ENCODE measurements at regions of chr2 and their contacts with region 1.

Region 1: GRCh38 chr2:15939854-15940660 is at the start of gene MYCN:
- DNase-seq: peak; percentile 92 to 95
- H3K4me3 ChIP-seq: peak within 1 kb of the TSS; percentile 75
- H3K4me3 Mint-ChIP-seq: peak within 1 kb of the TSS; percentile 85
- H3K27ac Mint-ChIP-seq: peak within 1 kb of the TSS; percentile 69
- H3K4me1 ChIP-seq: peaks cover 19% of the 10 kb centered on the region
- H3K4me1 Mint-ChIP-seq: peaks cover 17% of the 10 kb centered on the region
- H3K27me3 ChIP-seq: no peaks in the 10 kb centered on the region
- H3K27me3 Mint-ChIP-seq: no peaks in the 10 kb centered on the region
- CTCF ChIP-seq: peak in 1 of 2 experiments; percentile 80
- total RNA-seq, gene MYCN: 46.6 and 54.4 TPM in 2 replicates

Region 2: GRCh38 chr2:15748736-15749323 is 191.2 kb before region 1 on chr2:
- CTCF ChIA-PET with region 1: no interaction called
- POLR2A ChIA-PET with region 1: no interaction called
- intact Hi-C with region 1: no loop called
- DNase-seq: peak in 1 of 2 experiments; percentile 59
- H3K4me3 ChIP-seq: no peak overlapping the region
- H3K4me3 Mint-ChIP-seq: no peak overlapping the region
- H3K27ac Mint-ChIP-seq: peak overlapping the region; percentile 93
- H3K4me1 ChIP-seq: peaks cover 74% of the 10 kb centered on the region
- H3K4me1 Mint-ChIP-seq: peaks cover 48% of the 10 kb centered on the region
- H3K27me3 ChIP-seq: no peaks in the 10 kb centered on the region
- H3K27me3 Mint-ChIP-seq: no peaks in the 10 kb centered on the region
- CTCF ChIP-seq: peak; percentile 27 to 40

Region 3: GRCh38 chr2:15880226-15881119 is 59.6 kb before region 1 on chr2:
- CTCF ChIA-PET with region 1: no interaction called
- POLR2A ChIA-PET with region 1: no interaction called
- intact Hi-C with region 1: no loop called
- DNase-seq: no peak
- H3K4me3 ChIP-seq: no peak overlapping the region
- H3K4me3 Mint-ChIP-seq: no peak overlapping the region
- H3K27ac Mint-ChIP-seq: no peak overlapping the region
- H3K4me1 ChIP-seq: peaks cover 15% of the 10 kb centered on the region
- H3K4me1 Mint-ChIP-seq: peaks cover 8% of the 10 kb centered on the region
- H3K27me3 ChIP-seq: no peaks in the 10 kb centered on the region
- H3K27me3 Mint-ChIP-seq: no peaks in the 10 kb centered on the region
- CTCF ChIP-seq: no peak

Region 4: GRCh38 chr2:15890936-15891900 is 48.8 kb before region 1 on chr2:
- CTCF ChIA-PET with region 1: interaction called, 3 read pairs
- POLR2A ChIA-PET with region 1: no interaction called
- intact Hi-C with region 1: loop called (anchors 1 kb)
- DNase-seq: peak; percentile 89 to 94
- H3K4me3 ChIP-seq: no peak overlapping the region
- H3K4me3 Mint-ChIP-seq: peak overlapping the region; percentile 29
- H3K27ac Mint-ChIP-seq: peak overlapping the region; percentile 96
- H3K4me1 ChIP-seq: peaks cover 45% of the 10 kb centered on the region
- H3K4me1 Mint-ChIP-seq: peaks cover 58% of the 10 kb centered on the region
- H3K27me3 ChIP-seq: no peaks in the 10 kb centered on the region
- H3K27me3 Mint-ChIP-seq: no peaks in the 10 kb centered on the region
- CTCF ChIP-seq: no peak

Region 5: GRCh38 chr2:15955295-15956166 is 15.5 kb after region 1 on chr2:
- CTCF ChIA-PET with region 1: no interaction called
- POLR2A ChIA-PET with region 1: no interaction called
- intact Hi-C with region 1: no loop called
- DNase-seq: no peak
- H3K4me3 ChIP-seq: no peak overlapping the region
- H3K4me3 Mint-ChIP-seq: no peak overlapping the region
- H3K27ac Mint-ChIP-seq: no peak overlapping the region
- H3K4me1 ChIP-seq: peaks cover 6% of the 10 kb centered on the region; the same call in 1 of the 2 replicates
- H3K4me1 Mint-ChIP-seq: peaks cover 13% of the 10 kb centered on the region
- H3K27me3 ChIP-seq: no peaks in the 10 kb centered on the region
- H3K27me3 Mint-ChIP-seq: no peaks in the 10 kb centered on the region
- CTCF ChIP-seq: no peak

Region 6: DNA sequence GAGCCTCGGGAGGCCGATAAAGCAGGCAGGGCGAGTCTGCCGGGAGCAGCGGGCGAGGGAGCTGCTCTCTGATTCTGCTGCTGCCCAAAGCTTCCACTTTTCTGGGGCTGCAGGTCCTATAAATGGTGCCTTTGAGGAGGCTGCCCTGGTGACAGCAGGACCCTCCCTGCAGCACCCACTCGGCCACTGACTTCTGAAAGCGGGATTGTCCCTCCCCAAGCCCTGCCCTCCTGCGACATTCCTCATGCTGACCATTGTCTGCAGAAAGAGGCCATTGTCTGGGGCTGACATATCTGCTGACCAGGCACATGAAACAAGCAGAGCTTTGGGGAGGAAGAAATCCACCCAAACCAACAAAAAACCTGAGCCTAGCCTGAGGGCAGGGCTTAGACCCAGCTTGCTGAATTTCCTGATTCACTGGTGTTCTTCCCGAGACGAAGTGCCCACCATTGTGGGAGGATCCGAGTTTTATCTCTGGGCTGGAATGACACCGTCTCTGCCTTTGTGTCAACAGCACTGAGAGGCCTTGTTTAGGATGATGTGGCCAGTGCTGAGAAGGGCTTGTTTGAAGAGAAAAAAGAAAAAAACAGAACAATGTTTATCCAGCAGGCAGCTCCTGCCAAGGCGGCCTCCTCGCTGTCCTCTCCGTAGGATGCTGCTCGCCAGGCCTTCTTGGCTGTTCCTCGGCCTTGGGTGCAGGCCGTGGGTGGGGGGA is 130.0 kb after region 1 on chr2:
- CTCF ChIA-PET with region 1: interaction called, 3 read pairs
- POLR2A ChIA-PET with region 1: interaction called, 3 read pairs
- intact Hi-C with region 1: loop called (anchors 1 kb)
- DNase-seq: peak; percentile 68 to 77
- H3K4me3 ChIP-seq: no peak overlapping the region
- H3K4me3 Mint-ChIP-seq: no peak overlapping the region
- H3K27ac Mint-ChIP-seq: peak overlapping the region; percentile 81
- H3K4me1 ChIP-seq: peaks cover 45% of the 10 kb centered on the region
- H3K4me1 Mint-ChIP-seq: peaks cover 34% of the 10 kb centered on the region
- H3K27me3 ChIP-seq: no peaks in the 10 kb centered on the region
- H3K27me3 Mint-ChIP-seq: no peaks in the 10 kb centered on the region
- CTCF ChIP-seq: no peak

Region 7: DNA sequence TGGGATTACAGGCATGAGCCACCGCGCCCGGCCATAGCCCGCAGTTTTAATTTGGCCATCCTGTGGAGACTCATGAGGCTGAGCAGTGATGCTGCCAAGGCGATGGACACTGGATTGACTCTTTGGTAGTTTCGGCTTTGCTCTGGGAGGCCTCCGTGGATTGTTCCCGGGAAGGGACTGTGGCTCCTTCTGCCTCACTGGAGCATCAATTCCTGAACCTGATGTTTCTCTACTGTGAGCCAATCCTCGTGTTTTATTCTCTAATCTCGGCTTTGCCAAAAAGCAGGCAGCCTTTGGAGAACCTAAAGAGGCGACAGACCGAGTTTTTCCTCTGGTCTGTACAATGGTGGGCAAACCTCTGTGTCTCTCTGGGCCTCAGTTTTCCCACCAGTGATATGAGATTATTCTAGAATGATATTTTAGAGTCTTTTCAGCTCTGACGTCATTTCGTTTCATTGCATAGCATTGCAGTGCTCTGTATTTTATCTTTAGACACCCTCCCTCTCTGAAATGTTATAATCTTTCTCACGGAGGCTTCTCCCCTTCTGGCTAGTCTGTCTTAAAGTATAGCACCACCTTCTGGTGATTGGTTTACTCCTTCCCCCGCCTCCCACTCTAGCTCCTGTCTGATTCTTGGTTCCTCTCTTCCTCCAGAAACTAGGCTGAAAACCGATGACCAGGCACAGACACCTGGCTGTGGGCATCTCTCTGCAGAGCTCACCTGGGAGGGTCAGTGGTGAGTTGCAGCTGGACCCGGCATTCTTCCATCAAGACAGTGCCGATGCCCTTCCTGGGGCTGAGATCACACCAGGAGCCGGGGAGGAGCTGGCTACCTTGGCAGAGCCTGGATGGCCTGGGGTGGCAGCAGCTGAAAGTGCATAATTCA is 341.6 kb after region 1 on chr2:
- CTCF ChIA-PET with region 1: interaction called, 10 read pairs
- POLR2A ChIA-PET with region 1: no interaction called
- intact Hi-C with region 1: loop called (anchors 1 kb)
- DNase-seq: peak in 1 of 2 experiments; percentile 54
- H3K4me3 ChIP-seq: no peak overlapping the region
- H3K4me3 Mint-ChIP-seq: no peak overlapping the region
- H3K27ac Mint-ChIP-seq: peak overlapping the region; percentile 42
- H3K4me1 ChIP-seq: peaks cover 4% of the 10 kb centered on the region
- H3K4me1 Mint-ChIP-seq: peaks cover 21% of the 10 kb centered on the region
- H3K27me3 ChIP-seq: no peaks in the 10 kb centered on the region
- H3K27me3 Mint-ChIP-seq: no peaks in the 10 kb centered on the region
- CTCF ChIP-seq: peak; percentile 23 to 52

Region 8: DNA sequence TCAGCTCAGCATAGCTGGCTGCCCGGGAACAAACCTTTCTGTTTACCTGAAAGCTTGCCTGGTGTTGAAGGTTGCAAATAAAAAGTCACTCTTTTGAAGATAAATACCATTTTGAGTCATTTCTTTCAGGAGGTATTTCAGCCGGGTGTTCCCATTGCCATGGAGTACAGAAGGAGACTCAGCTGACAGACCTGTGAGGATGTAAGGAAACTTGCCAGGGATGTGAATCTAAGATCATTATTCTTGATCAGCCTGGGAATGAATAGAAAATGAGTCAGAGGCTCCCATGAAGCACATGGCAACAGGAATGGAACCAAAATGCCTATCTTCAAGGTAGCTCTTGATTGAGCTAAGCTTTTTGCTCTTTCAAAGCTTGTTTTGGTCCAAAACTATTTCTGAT is 494.3 kb after region 1 on chr2:
- CTCF ChIA-PET with region 1: no interaction called
- POLR2A ChIA-PET with region 1: no interaction called
- intact Hi-C with region 1: no loop called
- DNase-seq: no peak
- H3K4me3 ChIP-seq: no peak overlapping the region
- H3K4me3 Mint-ChIP-seq: no peak overlapping the region
- H3K27ac Mint-ChIP-seq: no peak overlapping the region
- H3K4me1 ChIP-seq: no peaks in the 10 kb centered on the region
- H3K4me1 Mint-ChIP-seq: peaks cover 15% of the 10 kb centered on the region
- H3K27me3 ChIP-seq: no peaks in the 10 kb centered on the region
- H3K27me3 Mint-ChIP-seq: no peaks in the 10 kb centered on the region
- CTCF ChIP-seq: no peak

Region 9: GRCh38 chr2:16487686-16488085 is 547.6 kb after region 1 on chr2:
- CTCF ChIA-PET with region 1: interaction called, 3 read pairs
- POLR2A ChIA-PET with region 1: no interaction called
- intact Hi-C with region 1: loop called (anchors 1 kb)
- DNase-seq: peak; percentile 42 to 50
- H3K4me3 ChIP-seq: no peak overlapping the region
- H3K4me3 Mint-ChIP-seq: no peak overlapping the region
- H3K27ac Mint-ChIP-seq: peak overlapping the region; percentile 31
- H3K4me1 ChIP-seq: no peaks in the 10 kb centered on the region
- H3K4me1 Mint-ChIP-seq: peaks cover 16% of the 10 kb centered on the region
- H3K27me3 ChIP-seq: no peaks in the 10 kb centered on the region
- H3K27me3 Mint-ChIP-seq: no peaks in the 10 kb centered on the region
- CTCF ChIP-seq: peak; percentile 34 to 59

Measured in Caco-2 (cell line).